ENCODE measurements at regions of chr3 and their contacts with region 1.

Region 1: DNA sequence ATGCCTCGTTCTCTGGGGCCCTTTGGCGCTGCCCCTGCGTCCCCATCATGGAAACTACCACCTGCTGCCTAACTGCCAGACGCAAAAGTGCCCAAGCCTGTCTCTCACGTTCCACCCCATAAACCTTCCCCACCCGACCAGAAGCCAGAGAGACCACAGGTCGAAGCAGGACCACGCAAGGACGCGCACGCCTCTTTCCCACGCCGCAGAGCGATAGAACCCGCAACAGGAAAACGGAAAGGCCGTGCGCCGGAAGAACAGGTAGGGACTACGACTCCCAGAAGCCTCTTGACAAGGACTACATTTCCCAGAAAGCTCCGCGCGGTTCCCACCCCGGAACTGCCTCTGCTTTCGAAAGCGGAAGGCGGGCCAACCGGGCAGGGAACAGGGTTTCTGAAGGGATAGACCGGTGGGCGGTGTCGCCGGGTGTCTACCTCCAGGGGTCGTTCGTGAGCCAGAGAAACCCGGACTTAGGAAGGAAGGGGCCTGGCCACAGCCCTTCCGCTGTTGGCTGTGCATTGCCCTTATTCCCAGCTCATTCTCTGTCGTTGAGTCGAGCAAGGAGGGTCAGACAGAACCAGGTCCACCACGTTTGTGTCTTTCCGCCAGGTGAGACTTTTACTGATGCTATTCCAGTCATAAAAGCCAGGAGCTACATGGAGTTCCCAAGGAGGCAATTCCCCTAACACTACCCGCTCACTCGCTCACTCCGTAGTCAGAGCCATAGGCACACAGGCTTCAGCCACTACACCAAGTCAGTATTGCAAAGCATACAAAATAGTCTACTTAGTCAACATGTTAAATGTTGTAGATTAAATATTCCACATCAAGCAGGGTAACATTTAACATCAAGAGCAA is 56.6 kb upstream of the ZBTB38 start:
- DNase-seq: peak; percentile 97 to 98
- ATAC-seq: peak; percentile 96 to 97
- H3K4me3 ChIP-seq: peak overlapping the region; percentile 83
- H3K27ac ChIP-seq: peak overlapping the region; percentile 89
- H3K4me1 ChIP-seq: peaks cover 14% of the 10 kb centered on the region
- CTCF ChIP-seq: peak; percentile 85
- EP300 ChIP-seq: no peak
- POLR2A ChIP-seq: peak; percentile 81
- RAD21 ChIP-seq: peak; percentile 96 to 99

Region 2: DNA sequence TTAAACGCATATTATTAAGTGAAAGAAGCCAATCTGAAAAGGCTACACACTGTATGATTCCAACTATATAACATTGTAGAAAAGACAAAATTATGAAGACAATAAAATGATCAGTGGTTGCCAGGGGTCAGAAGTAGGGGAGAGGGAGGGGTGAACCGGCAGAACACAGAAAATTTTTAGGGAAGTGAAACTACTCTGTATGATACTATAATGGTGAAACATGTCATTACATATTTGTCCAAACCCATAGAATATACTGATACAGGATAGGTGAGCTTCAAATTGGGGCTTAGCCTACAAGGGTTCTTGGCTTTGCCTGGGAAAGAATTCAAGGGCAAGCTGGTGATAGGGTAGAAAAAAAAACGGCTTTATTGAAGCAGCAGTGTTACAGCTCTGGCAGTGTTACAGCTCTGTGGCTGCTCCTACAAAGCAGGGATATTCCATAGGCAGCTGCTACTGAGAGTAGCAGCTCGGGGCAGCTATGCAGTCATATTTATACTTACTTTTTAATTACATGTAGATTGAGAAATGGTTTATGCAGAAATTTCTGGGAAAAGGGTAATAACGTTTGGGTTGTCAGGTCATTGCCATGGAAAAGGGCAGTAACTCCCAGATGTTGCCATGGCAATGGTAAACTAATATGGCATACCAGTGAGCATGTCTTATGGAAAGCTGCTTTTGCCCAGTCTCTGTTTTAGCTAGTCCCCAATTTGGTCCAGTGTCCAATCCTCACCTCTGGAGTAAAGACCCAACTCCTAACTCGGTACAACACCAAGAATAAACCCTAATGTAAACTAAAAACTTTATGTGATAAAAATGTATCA is 495.1 kb before region 1 on chr3:
- CTCF ChIA-PET with region 1: no interaction called
- POLR2A ChIA-PET with region 1: no interaction called
- DNase-seq: no peak
- ATAC-seq: no peak; a peak in 1 of 6 replicates
- H3K4me3 ChIP-seq: no peak overlapping the region
- H3K27ac ChIP-seq: no peak overlapping the region
- H3K4me1 ChIP-seq: no peaks in the 10 kb centered on the region
- CTCF ChIP-seq: no peak
- EP300 ChIP-seq: no peak
- POLR2A ChIP-seq: no peak
- RAD21 ChIP-seq: no peak

Region 3: GRCh38 chr3:141294848-141295247 is 16.9 kb before region 1 on chr3:
- CTCF ChIA-PET with region 1: no interaction called
- POLR2A ChIA-PET with region 1: no interaction called
- DNase-seq: peak; percentile 30 to 33
- ATAC-seq: peak in 1 of 2 experiments; percentile 80; a peak in 3 of 6 replicates
- H3K4me3 ChIP-seq: peak overlapping the region; percentile 33; the same call in 2 of the 3 replicates
- H3K27ac ChIP-seq: peak overlapping the region; percentile 16 to 37; a peak in 1 of 6 replicates
- H3K4me1 ChIP-seq: peaks cover 9% of the 10 kb centered on the region; the same call in 1 of the 3 replicates
- CTCF ChIP-seq: no peak
- EP300 ChIP-seq: no peak
- POLR2A ChIP-seq: no peak
- RAD21 ChIP-seq: no peak

Region 4: DNA sequence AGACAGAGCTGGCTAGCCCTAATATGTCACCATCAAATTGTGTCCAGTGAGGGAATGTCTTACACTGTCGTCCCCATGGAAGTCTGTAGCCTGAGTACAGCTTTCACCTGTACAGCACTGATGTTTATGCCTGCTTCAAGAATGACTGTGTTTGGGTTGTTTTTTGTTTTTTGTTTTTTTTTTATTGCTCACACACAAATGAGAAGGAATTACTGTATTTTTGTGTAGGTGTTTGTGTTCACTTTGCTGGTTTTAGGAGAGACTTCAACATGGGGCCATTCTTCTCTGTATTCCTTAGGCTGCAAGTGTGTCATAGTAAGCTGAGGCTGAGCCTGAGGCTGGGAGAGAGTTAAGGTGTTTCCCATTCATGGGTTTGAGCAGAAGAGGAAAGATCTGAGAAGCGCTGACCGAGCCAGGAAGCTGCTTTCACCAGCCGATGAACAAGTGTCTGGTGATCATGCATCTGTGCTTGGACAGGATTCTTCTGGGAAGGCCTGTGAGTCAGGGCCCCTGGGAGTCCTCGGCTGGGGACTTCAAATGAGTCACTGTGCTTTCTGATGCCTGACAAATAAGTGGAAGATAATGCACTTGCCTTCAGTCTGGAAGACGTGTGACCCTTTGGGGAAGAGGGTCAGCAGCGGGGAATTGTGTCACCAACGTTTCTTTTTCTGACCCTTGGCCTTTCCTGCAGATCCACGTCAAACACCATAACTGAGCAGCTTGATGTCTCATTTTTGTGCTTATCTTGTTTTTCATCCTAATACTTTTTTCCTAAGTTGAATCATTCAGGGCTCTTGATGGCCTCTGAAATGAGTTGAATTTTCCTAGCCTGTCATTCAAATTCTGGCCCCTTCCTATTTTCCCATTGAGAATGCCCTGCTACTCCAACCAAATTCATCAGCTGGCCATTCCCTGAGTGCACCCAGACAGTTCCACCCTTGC is 19.9 kb after region 1 on chr3:
- CTCF ChIA-PET with region 1: interaction called, 217 read pairs
- POLR2A ChIA-PET with region 1: interaction called, 22 read pairs
- DNase-seq: peak; percentile 96 to 97
- ATAC-seq: peak; percentile 93 to 96
- H3K4me3 ChIP-seq: no peak overlapping the region
- H3K27ac ChIP-seq: peak overlapping the region; percentile 91 to 94
- H3K4me1 ChIP-seq: peaks cover 70% of the 10 kb centered on the region
- CTCF ChIP-seq: no peak
- EP300 ChIP-seq: peak; percentile 97 to 98
- POLR2A ChIP-seq: no peak
- RAD21 ChIP-seq: peak in 1 of 2 experiments; percentile 57

Region 5: GRCh38 chr3:141360888-141361598 is 49.3 kb after region 1 on chr3:
- CTCF ChIA-PET with region 1: interaction called, 60 read pairs
- POLR2A ChIA-PET with region 1: interaction called, 16 read pairs
- DNase-seq: peak; percentile 86 to 95
- ATAC-seq: peak; percentile 95
- H3K4me3 ChIP-seq: no peak overlapping the region
- H3K27ac ChIP-seq: peak overlapping the region; percentile 89 to 100
- H3K4me1 ChIP-seq: peaks cover 30% of the 10 kb centered on the region
- CTCF ChIP-seq: peak; percentile 92
- EP300 ChIP-seq: peak; percentile 75 to 84; a peak in 3 of 5 replicates
- POLR2A ChIP-seq: no peak
- RAD21 ChIP-seq: peak; percentile 94 to 97

Region 6: DNA sequence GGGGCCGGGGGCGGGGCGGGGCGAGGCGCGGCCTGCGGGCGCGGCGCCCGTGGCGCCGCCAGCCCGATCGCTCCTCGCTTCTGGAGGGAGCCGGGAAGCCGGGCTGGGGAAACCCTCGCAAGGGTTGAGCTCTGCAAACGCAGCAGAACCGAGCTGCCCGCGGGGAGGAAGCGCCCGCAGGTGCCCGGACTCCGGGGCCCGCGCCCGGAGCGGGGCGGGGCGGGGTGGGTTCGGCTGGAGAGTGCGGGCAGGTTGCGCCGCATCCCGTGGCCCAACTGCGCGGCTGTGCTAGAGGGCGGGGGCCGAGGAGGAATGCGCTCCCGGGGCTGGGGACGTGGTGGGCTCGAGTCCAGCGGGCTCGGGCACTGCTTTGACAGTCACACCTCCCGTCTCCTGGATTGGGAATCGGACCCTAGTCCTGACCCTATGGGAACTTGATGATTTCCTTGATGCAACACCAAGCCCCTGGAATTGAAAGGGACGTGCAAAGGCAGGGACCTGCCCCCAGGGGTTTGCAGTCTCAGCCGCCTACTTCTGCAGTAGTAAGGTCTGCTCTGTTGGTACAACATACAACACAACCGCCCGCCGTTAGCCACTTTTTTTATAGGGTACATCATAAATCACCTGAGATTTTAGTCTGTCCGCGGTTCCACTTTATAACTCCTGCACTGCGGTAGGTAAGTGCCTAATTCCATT is 90.9 kb after region 1 on chr3:
- CTCF ChIA-PET with region 1: interaction called, 15 read pairs
- POLR2A ChIA-PET with region 1: interaction called, 7 read pairs
- DNase-seq: peak; percentile 45 to 74
- ATAC-seq: peak; percentile 82
- H3K4me3 ChIP-seq: peak overlapping the region; percentile 66
- H3K27ac ChIP-seq: peak overlapping the region; percentile 99 to 100
- H3K4me1 ChIP-seq: peaks cover 84% of the 10 kb centered on the region
- CTCF ChIP-seq: no peak
- EP300 ChIP-seq: no peak
- POLR2A ChIP-seq: no peak
- RAD21 ChIP-seq: no peak

Region 7: DNA sequence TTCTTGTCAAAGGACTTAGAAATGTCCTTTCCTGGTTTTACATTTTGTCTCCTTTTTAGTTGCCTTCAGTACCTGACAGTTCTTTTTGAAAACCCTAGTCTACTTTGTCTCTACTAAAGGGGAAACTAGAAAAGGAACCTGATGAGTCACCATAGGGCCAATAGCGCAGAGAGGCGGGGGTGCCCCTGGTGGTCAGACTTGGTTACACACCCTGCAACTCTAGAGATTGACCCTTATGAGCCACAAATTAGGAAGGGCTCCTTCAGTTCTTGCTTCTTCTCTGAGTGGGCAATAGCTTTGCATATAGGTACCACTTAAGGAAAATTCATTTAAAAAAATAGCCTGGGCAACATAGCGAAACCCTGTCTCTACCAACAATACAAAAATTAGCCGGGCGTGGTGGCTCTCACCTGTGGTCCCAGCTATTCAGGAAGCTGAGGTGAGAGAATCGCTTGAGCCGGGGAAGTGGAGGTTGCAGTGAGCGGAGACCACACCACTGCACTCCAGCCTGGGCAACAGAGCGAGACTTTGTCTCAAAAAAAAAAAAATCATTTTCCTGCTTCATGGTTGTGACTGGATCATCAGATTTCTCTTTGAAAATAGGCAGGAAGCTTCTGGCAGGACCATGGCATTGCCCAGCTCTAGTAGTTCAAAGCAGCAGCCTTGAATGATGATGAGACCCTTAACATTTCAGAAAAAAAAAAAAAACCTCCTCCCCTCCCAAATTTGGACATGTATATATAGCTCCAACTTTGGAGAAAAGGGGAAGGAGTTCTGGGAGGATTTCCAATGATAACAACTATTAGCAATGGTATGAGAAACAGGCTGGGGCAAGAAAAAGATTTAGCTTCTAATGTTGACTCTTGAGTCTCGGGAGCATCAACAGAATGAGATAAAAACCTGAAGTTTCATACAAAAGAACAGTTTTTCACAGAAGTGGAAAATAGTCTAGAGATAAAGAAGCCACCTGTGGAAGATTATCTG is 129.9 kb after region 1 on chr3:
- CTCF ChIA-PET with region 1: interaction called, 38 read pairs
- POLR2A ChIA-PET with region 1: no interaction called
- DNase-seq: peak; percentile 66 to 73
- ATAC-seq: peak; percentile 88 to 94
- H3K4me3 ChIP-seq: no peak overlapping the region
- H3K27ac ChIP-seq: peak overlapping the region; percentile 4 to 68; a peak in 4 of 6 replicates
- H3K4me1 ChIP-seq: peaks cover 23% of the 10 kb centered on the region
- CTCF ChIP-seq: peak; percentile 61
- EP300 ChIP-seq: no peak
- POLR2A ChIP-seq: no peak
- RAD21 ChIP-seq: peak; percentile 62 to 71

Region 8: GRCh38 chr3:141561426-141562034 is 249.8 kb after region 1 on chr3:
- CTCF ChIA-PET with region 1: interaction called, 25 read pairs
- POLR2A ChIA-PET with region 1: interaction called, 3 read pairs
- DNase-seq: peak in 1 of 2 experiments; percentile 81
- ATAC-seq: peak in 1 of 2 experiments; percentile 55; a peak in 2 of 6 replicates
- H3K4me3 ChIP-seq: no peak overlapping the region
- H3K27ac ChIP-seq: peak overlapping the region in 1 of 2 experiments; percentile 39; a peak in 1 of 6 replicates
- H3K4me1 ChIP-seq: 0 out of 3 replicates have a peak, but pooled peaks cover 3% of the 10 kb centered on the region
- CTCF ChIP-seq: peak; percentile 98
- EP300 ChIP-seq: no peak
- POLR2A ChIP-seq: no peak
- RAD21 ChIP-seq: peak; percentile 98 to 99

Measured in A549 (cell line).